H1 (cell line): ENCODE measurements at regions of chr4 and their contacts with region 1.

Region 1: DNA sequence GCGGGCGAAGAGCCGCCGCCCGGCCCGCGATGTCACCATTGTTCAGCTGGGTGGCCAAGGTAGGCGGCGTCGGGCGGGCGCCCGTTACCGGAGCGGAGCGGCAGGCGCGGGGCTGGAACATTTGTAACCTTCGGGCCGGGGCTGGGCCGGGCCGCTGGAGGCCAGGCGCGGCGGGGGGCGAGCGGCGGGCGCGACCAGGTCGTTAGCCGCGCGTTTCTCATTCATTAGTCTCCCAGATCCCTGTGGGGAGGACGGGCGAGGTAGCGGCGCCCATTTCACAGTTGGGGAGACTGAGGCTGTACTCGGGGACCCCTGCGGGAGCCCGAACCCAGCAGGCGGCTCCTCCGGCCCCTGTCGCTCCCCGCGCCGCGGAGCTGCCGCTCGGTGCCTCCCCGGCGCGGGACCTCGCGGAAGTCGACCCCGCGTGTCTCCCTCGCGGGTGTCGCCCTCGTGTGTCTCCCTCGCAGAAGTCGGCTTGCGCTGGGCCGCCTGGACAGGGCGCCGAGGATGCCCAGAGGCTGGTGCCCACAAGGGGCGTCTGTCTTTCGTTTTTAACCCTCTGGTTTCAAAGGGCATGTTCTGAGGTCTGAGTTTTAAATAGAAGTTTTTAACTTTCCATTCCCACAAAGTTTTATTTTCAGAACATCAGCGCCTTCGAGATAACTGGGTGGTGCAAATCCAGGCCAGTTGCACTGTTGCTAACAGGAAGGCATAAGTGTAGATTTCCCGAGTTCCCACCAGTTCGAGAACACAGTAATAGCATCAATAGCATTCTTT is 17.5 kb downstream of the PTTG2 start:
- DNase-seq: peak in 1 of 2 experiments; percentile 72
- H3K4me3 ChIP-seq: peak overlapping the region; percentile 62 to 96 (median 68)
- H3K27ac ChIP-seq: no peak overlapping the region
- H3K4me1 ChIP-seq: peaks cover 8 to 20% (median 12%) of the 10 kb centered on the region in 4 experiments; a peak in 6 of 7 replicates
- H3K27me3 ChIP-seq: no peaks in the 10 kb centered on the region
- CTCF ChIP-seq: peak; percentile 46 to 56 (median 55)
- EP300 ChIP-seq: no peak
- POLR2A ChIP-seq: peak in 1 of 2 experiments; percentile 37; a peak in 1 of 3 replicates
- RAD21 ChIP-seq: peak; percentile 20 to 33; a peak in 3 of 4 replicates

Region 2: GRCh38 chr4:37989398-37990260 is 12.0 kb after region 1 on chr4:
- CTCF ChIA-PET with region 1: interaction called, 3 read pairs
- POLR2A ChIA-PET with region 1: interaction called, 26 read pairs
- DNase-seq: peak in 1 of 2 experiments; percentile 24
- H3K4me3 ChIP-seq: peak overlapping the region in 1 of 4 experiments; percentile 26; a peak in 1 of 8 replicates
- H3K27ac ChIP-seq: 0 out of 2 replicates have a peak overlapping the region, but pooled peaks have one; percentile 11
- H3K4me1 ChIP-seq: peaks cover 19 to 39% (median 30%) of the 10 kb centered on the region in 4 experiments
- H3K27me3 ChIP-seq: no peaks in the 10 kb centered on the region
- CTCF ChIP-seq: no peak
- EP300 ChIP-seq: no peak
- POLR2A ChIP-seq: no peak
- RAD21 ChIP-seq: no peak

Region 3: GRCh38 chr4:38002451-38003071 is 24.9 kb after region 1 on chr4:
- CTCF ChIA-PET with region 1: interaction called, 3 read pairs
- POLR2A ChIA-PET with region 1: interaction called, 15 read pairs
- DNase-seq: no peak
- H3K4me3 ChIP-seq: no peak overlapping the region; a peak in 1 of 8 replicates
- H3K27ac ChIP-seq: no peak overlapping the region; the same call in 1 of the 2 replicates
- H3K4me1 ChIP-seq: peaks cover 9 to 28% (median 20%) of the 10 kb centered on the region in 4 experiments; a peak in 6 of 7 replicates
- H3K27me3 ChIP-seq: no peaks in the 10 kb centered on the region
- CTCF ChIP-seq: no peak
- EP300 ChIP-seq: no peak
- POLR2A ChIP-seq: no peak
- RAD21 ChIP-seq: no peak

Region 4: GRCh38 chr4:38582889-38583470 is 605.3 kb after region 1 on chr4:
- CTCF ChIA-PET with region 1: no interaction called
- POLR2A ChIA-PET with region 1: no interaction called
- DNase-seq: no peak
- H3K4me3 ChIP-seq: no peak overlapping the region
- H3K27ac ChIP-seq: no peak overlapping the region
- H3K4me1 ChIP-seq: no peaks in the 10 kb centered on the region
- H3K27me3 ChIP-seq: no peaks in the 10 kb centered on the region
- CTCF ChIP-seq: no peak
- EP300 ChIP-seq: no peak
- POLR2A ChIP-seq: no peak
- RAD21 ChIP-seq: no peak